ENCODE measurements at regions of chr6 and their contacts with region 1.

Region 1: GRCh38 chr6:119078376-119079282 is at the start of gene FAM184A:
- DNase-seq: peak; percentile 51 to 92 (median 71)
- ATAC-seq: peak; percentile 75
- H3K4me3 ChIP-seq: peak within 1 kb of the TSS; percentile 65
- H3K4me3 Mint-ChIP-seq: peak within 1 kb of the TSS; percentile 91
- H3K27ac ChIP-seq: peak within 1 kb of the TSS; percentile 53 to 58
- H3K27ac Mint-ChIP-seq: peak within 1 kb of the TSS; percentile 90
- H3K4me1 ChIP-seq: peaks cover 25% of the 10 kb centered on the region
- H3K4me1 Mint-ChIP-seq: peaks cover 40% of the 10 kb centered on the region
- H3K27me3 ChIP-seq: no peaks in the 10 kb centered on the region
- H3K27me3 Mint-ChIP-seq: no peaks in the 10 kb centered on the region
- CTCF ChIP-seq: no peak
- total RNA-seq, gene FAM184A: 2.9 to 3.3 TPM

Region 2: GRCh38 chr6:118810420-118811027 is 268.1 kb before region 1 on chr6:
- CTCF ChIA-PET with region 1: no interaction called
- POLR2A ChIA-PET with region 1: no interaction called
- intact Hi-C with region 1: loop called in 1 of 2 experiments (anchors 10 kb)
- DNase-seq: peak; percentile 25 to 95 (median 56)
- ATAC-seq: peak; percentile 98
- H3K4me3 ChIP-seq: peak overlapping the region; percentile 15
- H3K4me3 Mint-ChIP-seq: peak overlapping the region; percentile 81
- H3K27ac ChIP-seq: peak overlapping the region in 1 of 2 donors; percentile 62
- H3K27ac Mint-ChIP-seq: peak overlapping the region; percentile 87
- H3K4me1 ChIP-seq: peaks cover 22% of the 10 kb centered on the region
- H3K4me1 Mint-ChIP-seq: peaks cover 61% of the 10 kb centered on the region
- H3K27me3 ChIP-seq: no peaks in the 10 kb centered on the region
- H3K27me3 Mint-ChIP-seq: no peaks in the 10 kb centered on the region
- CTCF ChIP-seq: no peak

Region 3: DNA sequence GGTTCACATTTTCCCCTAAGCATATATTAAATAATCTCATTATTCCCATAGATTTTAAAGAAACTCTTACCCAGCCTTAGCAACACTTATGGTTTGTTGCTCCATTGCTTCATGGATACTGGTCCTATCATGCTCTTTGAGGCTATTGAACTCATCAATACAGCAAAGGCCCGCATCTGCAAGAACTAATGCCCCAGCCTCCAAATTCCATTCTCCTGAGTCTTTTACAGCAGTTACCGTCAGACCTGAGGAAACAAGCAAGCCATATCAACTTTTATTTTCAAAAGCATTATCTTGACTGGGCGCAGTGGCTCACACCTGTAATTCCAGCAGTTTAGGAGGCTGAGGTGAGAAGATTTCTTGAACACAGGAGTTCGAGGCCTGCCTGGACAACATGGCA is 222.3 kb before region 1 on chr6:
- CTCF ChIA-PET with region 1: no interaction called
- POLR2A ChIA-PET with region 1: no interaction called
- intact Hi-C with region 1: no loop called
- DNase-seq: no peak
- ATAC-seq: no peak
- H3K4me3 ChIP-seq: no peak overlapping the region
- H3K4me3 Mint-ChIP-seq: no peak overlapping the region
- H3K27ac ChIP-seq: no peak overlapping the region
- H3K27ac Mint-ChIP-seq: no peak overlapping the region
- H3K4me1 ChIP-seq: peaks cover 2% of the 10 kb centered on the region
- H3K4me1 Mint-ChIP-seq: peaks cover 28% of the 10 kb centered on the region
- H3K27me3 ChIP-seq: no peaks in the 10 kb centered on the region
- H3K27me3 Mint-ChIP-seq: no peaks in the 10 kb centered on the region
- CTCF ChIP-seq: no peak

Region 4: GRCh38 chr6:118934461-118935330 is 143.9 kb before region 1 on chr6 and contains the start of gene MCM9:
- CTCF ChIA-PET with region 1: interaction called, 3 read pairs
- POLR2A ChIA-PET with region 1: interaction called, 18 read pairs
- intact Hi-C with region 1: loop called in 1 of 2 experiments (anchors 2 kb)
- DNase-seq: peak; percentile 71 to 96 (median 84)
- ATAC-seq: peak; percentile 88
- H3K4me3 ChIP-seq: peak within 1 kb of the TSS; percentile 92
- H3K4me3 Mint-ChIP-seq: peak within 1 kb of the TSS; percentile 91
- H3K27ac ChIP-seq: peak within 1 kb of the TSS; percentile 79 to 88
- H3K27ac Mint-ChIP-seq: peak within 1 kb of the TSS; percentile 88
- H3K4me1 ChIP-seq: peaks cover 19% of the 10 kb centered on the region
- H3K4me1 Mint-ChIP-seq: peaks cover 53% of the 10 kb centered on the region
- H3K27me3 ChIP-seq: no peaks in the 10 kb centered on the region
- H3K27me3 Mint-ChIP-seq: no peaks in the 10 kb centered on the region
- CTCF ChIP-seq: no peak
- total RNA-seq, gene MCM9: 25.5 TPM

Region 5: GRCh38 chr6:119052292-119052889 is 26.2 kb before region 1 on chr6:
- CTCF ChIA-PET with region 1: interaction called, 4 read pairs
- POLR2A ChIA-PET with region 1: no interaction called
- intact Hi-C with region 1: loop called in 1 of 2 experiments (anchors 2 kb)
- DNase-seq: peak in 3 of 14 experiments; percentile 19 to 24 (median 20)
- ATAC-seq: peak; percentile 55
- H3K4me3 ChIP-seq: no peak overlapping the region
- H3K4me3 Mint-ChIP-seq: no peak overlapping the region
- H3K27ac ChIP-seq: no peak overlapping the region
- H3K27ac Mint-ChIP-seq: peak overlapping the region; percentile 28
- H3K4me1 ChIP-seq: peaks cover 4% of the 10 kb centered on the region
- H3K4me1 Mint-ChIP-seq: peaks cover 29% of the 10 kb centered on the region
- H3K27me3 ChIP-seq: no peaks in the 10 kb centered on the region
- H3K27me3 Mint-ChIP-seq: no peaks in the 10 kb centered on the region
- CTCF ChIP-seq: no peak